ENCODE measurements at regions of chr17 and their contacts with region 1.

Region 1: GRCh38 chr17:56913864-56914640 is at the start of gene TRIM25:
- DNase-seq: peak; percentile 95
- ATAC-seq: peak; percentile 89
- H3K4me3 Mint-ChIP-seq: peak within 1 kb of the TSS; percentile 86
- H3K27ac Mint-ChIP-seq: peak within 1 kb of the TSS; percentile 96
- H3K4me1 Mint-ChIP-seq: peaks cover 44% of the 10 kb centered on the region
- H3K27me3 Mint-ChIP-seq: no peaks in the 10 kb centered on the region
- total RNA-seq, gene TRIM25: 131 to 142 TPM

Region 2: GRCh38 chr17:56833809-56834379 is 80.2 kb before region 1 on chr17 and contains the starts of genes C17orf67 and DGKE:
- CTCF ChIA-PET with region 1: no interaction called
- POLR2A ChIA-PET with region 1: interaction called, 36 read pairs
- DNase-seq: peak; percentile 99
- ATAC-seq: peak; percentile 82
- H3K4me3 Mint-ChIP-seq: peak within 1 kb of the TSS; percentile 94
- H3K27ac Mint-ChIP-seq: peak within 1 kb of the TSS; percentile 95
- H3K4me1 Mint-ChIP-seq: peaks cover 55% of the 10 kb centered on the region
- H3K27me3 Mint-ChIP-seq: no peaks in the 10 kb centered on the region
- total RNA-seq, gene C17orf67: 3.1 to 3.2 TPM
- total RNA-seq, gene DGKE: 30.8 to 31.1 TPM

Region 3: DNA sequence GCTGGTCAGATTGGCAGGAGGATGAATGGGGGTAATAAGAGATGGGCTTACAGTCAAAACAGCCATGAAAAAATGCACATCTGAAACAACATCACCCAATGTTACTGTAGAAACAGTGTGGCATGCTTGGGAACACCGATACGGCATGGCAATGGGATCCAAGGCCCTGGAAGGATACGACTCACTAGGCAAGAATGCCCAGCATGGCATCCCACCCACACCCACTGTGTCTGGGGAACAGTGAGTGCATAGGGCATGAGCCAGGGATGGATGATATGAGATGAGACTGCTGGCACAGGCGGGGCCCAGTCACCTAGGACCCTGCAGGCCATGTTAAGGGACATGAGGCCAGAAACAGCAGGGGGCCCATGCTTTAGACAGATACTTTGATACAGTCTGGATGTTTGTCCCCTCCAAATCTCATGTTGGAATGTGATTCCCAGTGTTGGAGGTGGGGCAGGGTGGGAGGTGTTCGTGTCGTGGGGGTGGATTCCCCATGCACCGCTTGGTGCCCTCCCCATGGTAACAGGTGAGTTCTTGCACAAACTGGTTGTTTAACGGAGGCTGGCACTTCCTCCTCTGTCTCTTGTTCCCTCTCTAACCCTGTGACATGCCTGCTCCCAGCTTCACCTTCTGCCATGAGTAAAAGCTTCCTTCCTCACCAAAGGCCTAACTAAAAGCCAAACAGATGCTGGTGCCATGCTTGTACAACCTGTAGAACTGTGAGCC is 11.5 kb before region 1 on chr17:
- CTCF ChIA-PET with region 1: interaction called, 6 read pairs
- POLR2A ChIA-PET with region 1: interaction called, 19 read pairs
- DNase-seq: no peak
- ATAC-seq: no peak
- H3K4me3 Mint-ChIP-seq: no peak overlapping the region
- H3K27ac Mint-ChIP-seq: no peak overlapping the region
- H3K4me1 Mint-ChIP-seq: peaks cover 39% of the 10 kb centered on the region
- H3K27me3 Mint-ChIP-seq: no peaks in the 10 kb centered on the region

Region 4: DNA sequence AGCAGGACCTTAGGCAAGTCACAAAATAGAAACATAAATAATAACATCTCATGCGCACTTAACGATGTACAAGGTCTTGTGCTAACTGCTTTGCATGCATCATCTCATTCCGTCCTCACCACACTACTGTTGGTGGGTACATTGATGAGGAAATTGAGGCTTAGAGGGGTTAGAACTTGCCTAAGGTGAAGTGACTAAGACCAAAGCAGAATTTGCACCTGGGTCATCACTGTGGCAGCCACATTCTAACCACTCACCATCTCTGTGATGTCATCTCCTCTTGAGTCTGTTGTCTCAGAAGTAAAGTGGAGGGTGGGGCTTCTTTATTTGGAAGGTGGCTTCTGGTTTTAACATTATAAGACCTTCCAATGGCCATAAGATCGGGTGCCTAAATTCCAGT is 20.2 kb after region 1 on chr17:
- CTCF ChIA-PET with region 1: interaction called, 7 read pairs
- POLR2A ChIA-PET with region 1: interaction called, 17 read pairs
- DNase-seq: peak; percentile 59
- ATAC-seq: peak; percentile 71
- H3K4me3 Mint-ChIP-seq: no peak overlapping the region
- H3K27ac Mint-ChIP-seq: peak overlapping the region; percentile 57
- H3K4me1 Mint-ChIP-seq: peaks cover 35% of the 10 kb centered on the region
- H3K27me3 Mint-ChIP-seq: no peaks in the 10 kb centered on the region

Region 5: GRCh38 chr17:56939901-56940343 is 25.9 kb after region 1 on chr17:
- CTCF ChIA-PET with region 1: interaction called, 7 read pairs
- POLR2A ChIA-PET with region 1: interaction called, 15 read pairs
- DNase-seq: no peak
- ATAC-seq: peak; percentile 70
- H3K4me3 Mint-ChIP-seq: no peak overlapping the region
- H3K27ac Mint-ChIP-seq: peak overlapping the region; percentile 57
- H3K4me1 Mint-ChIP-seq: peaks cover 23% of the 10 kb centered on the region
- H3K27me3 Mint-ChIP-seq: no peaks in the 10 kb centered on the region

Measured in activated CD8-positive, alpha-beta T cell treated with anti-CD3 and anti-CD28 coated beads, Interleukin-2, amount 10 ng/mL, durations not matched to agents 7 days and 5 days (primary cell).